CD4-positive, alpha-beta T cell (primary cell): ENCODE measurements at regions of chr6 and their contacts with region 1.

Region 1: GRCh38 chr6:108565893-108566292 is 5.2 kb downstream of the FOXO3 start:
- DNase-seq: peak in 3 of 14 experiments; percentile 61 to 74 (median 65)
- ATAC-seq: no peak
- H3K4me3 ChIP-seq: no peak overlapping the region
- H3K4me3 Mint-ChIP-seq: no peak overlapping the region
- H3K27ac ChIP-seq: no peak overlapping the region
- H3K27ac Mint-ChIP-seq: peak overlapping the region; percentile 75
- H3K4me1 ChIP-seq: peaks cover 50% of the 10 kb centered on the region
- H3K4me1 Mint-ChIP-seq: peaks cover 69% of the 10 kb centered on the region
- H3K27me3 ChIP-seq: no peaks in the 10 kb centered on the region
- H3K27me3 Mint-ChIP-seq: no peaks in the 10 kb centered on the region
- CTCF ChIP-seq: no peak

Region 2: DNA sequence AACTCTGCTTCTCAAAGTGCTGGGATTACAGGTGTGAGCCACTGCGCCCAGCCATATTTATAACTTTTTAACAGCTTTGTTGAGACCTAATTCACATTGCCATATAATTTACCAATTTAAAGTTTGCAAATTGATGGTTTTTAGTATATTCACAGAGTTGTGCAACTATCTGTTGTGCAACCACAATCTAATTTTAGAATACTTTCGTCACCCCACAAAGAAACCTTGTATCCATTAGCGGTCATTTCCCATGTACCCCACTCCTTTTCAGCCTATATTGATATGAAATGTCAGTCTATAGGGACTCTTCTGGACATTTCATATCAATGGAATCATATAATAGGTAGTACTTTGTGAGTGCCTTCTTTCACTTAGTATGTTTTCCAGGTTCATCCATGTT is 50.7 kb after region 1 on chr6:
- CTCF ChIA-PET with region 1: no interaction called
- POLR2A ChIA-PET with region 1: no interaction called
- intact Hi-C with region 1: loop called in 1 of 2 experiments (anchors 5 kb)
- DNase-seq: peak in 1 of 14 experiments; percentile 26
- ATAC-seq: no peak
- H3K4me3 ChIP-seq: no peak overlapping the region
- H3K4me3 Mint-ChIP-seq: no peak overlapping the region
- H3K27ac ChIP-seq: no peak overlapping the region
- H3K27ac Mint-ChIP-seq: no peak overlapping the region
- H3K4me1 ChIP-seq: peaks cover 11% of the 10 kb centered on the region
- H3K4me1 Mint-ChIP-seq: peaks cover 72% of the 10 kb centered on the region
- H3K27me3 ChIP-seq: no peaks in the 10 kb centered on the region
- H3K27me3 Mint-ChIP-seq: no peaks in the 10 kb centered on the region
- CTCF ChIP-seq: no peak

Region 3: GRCh38 chr6:108630050-108630714 is 64.3 kb after region 1 on chr6:
- CTCF ChIA-PET with region 1: no interaction called
- POLR2A ChIA-PET with region 1: no interaction called
- intact Hi-C with region 1: loop called in 1 of 2 experiments (anchors 5 kb)
- DNase-seq: peak in 4 of 14 experiments; percentile 27 to 50 (median 34)
- ATAC-seq: peak; percentile 93
- H3K4me3 ChIP-seq: no peak overlapping the region
- H3K4me3 Mint-ChIP-seq: peak overlapping the region; percentile 7
- H3K27ac ChIP-seq: no peak overlapping the region
- H3K27ac Mint-ChIP-seq: peak overlapping the region; percentile 7
- H3K4me1 ChIP-seq: peaks cover 31% of the 10 kb centered on the region
- H3K4me1 Mint-ChIP-seq: peaks cover 89% of the 10 kb centered on the region
- H3K27me3 ChIP-seq: no peaks in the 10 kb centered on the region
- H3K27me3 Mint-ChIP-seq: no peaks in the 10 kb centered on the region
- CTCF ChIP-seq: no peak